GM10248 (cell line): ENCODE measurements at regions of chr20 and their contacts with region 1.

Region 1: DNA sequence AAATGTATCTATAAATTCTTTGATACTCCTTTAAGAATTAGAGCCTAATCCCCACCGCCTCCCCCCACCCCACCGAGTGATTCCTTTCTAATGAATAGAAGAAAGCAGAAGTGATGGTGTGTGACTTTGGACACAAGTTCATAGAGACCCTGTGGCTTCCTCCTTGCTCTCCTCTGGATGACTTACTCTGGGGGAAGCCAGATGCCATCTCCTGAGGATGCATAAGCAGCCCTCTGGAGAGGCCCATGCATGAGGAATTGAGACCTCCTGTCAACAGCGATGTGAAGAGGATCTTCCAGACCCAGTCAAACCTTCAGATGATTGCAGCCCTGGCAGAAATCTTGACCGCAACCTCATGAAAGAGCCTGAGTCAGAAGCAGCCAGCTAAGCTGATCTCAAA is 21.1 kb downstream of the AHCY start:
- DNase-seq: no peak
- CTCF ChIP-seq: no peak

Region 2: GRCh38 chr20:34180460-34181120 is 101.5 kb before region 1 on chr20:
- CTCF ChIA-PET with region 1: no interaction called
- POLR2A ChIA-PET with region 1: no interaction called
- DNase-seq: no peak
- CTCF ChIP-seq: no peak

Region 3: GRCh38 chr20:34302723-34303528 is 20.9 kb after region 1 on chr20 and contains the start of gene AHCY:
- CTCF ChIA-PET with region 1: interaction called, 10 read pairs
- POLR2A ChIA-PET with region 1: no interaction called
- DNase-seq: peak; percentile 96
- CTCF ChIP-seq: no peak